Keratinocyte (primary cell): ENCODE measurements at regions of chr3 and their contacts with region 1.

Region 1: DNA sequence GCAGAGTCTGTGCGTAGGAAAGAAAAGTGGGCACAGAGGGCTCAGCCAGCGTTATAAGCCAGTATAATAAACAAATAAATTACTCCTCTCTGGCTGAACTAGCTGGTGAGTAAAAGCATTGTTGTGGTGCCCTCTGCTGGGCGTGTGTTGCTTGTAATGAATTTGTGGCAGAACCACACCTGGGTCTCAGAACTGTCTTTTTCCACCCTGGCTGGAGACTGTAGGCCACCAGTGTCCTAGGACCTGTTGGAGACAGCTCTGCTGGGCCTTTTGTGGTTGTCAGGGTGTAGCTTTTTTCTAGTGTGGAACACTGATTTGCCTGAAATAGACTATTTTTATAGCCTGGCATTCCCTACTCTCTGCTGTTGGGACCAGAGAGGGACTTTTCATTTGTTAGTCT is 130.5 kb upstream of the EIF1B start:
- DNase-seq: peak; percentile 11
- H3K4me3 ChIP-seq: no peak overlapping the region
- H3K27ac ChIP-seq: no peak overlapping the region
- H3K4me1 ChIP-seq: no peaks in the 10 kb centered on the region
- H3K27me3 ChIP-seq: no peaks in the 10 kb centered on the region
- CTCF ChIP-seq: peak; percentile 70 to 84 (median 79)

Region 2: DNA sequence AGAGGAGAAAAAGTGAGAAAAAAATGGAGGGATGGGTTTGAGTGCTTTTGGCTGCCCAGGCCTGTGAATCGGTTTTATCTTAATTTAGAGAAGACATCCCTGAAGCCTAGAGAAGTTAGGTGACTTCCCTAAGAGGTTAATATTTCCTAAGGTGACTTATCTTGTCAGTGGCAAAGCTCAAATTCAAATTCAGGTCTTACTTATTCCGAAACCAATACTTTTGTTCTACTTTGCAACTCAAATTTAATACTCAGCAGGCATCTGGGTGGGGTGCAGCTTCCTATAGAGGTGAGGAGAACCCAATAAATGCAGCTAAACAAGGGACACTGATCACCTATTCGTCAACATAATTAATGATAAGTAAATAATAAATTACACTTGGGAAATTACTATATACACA is 424.5 kb before region 1 on chr3:
- dilution Hi-C with region 1: no loop called
- DNase-seq: no peak
- H3K4me3 ChIP-seq: no peak overlapping the region
- H3K27ac ChIP-seq: no peak overlapping the region
- H3K4me1 ChIP-seq: peaks cover 11% of the 10 kb centered on the region
- H3K27me3 ChIP-seq: no peaks in the 10 kb centered on the region
- CTCF ChIP-seq: no peak

Region 3: DNA sequence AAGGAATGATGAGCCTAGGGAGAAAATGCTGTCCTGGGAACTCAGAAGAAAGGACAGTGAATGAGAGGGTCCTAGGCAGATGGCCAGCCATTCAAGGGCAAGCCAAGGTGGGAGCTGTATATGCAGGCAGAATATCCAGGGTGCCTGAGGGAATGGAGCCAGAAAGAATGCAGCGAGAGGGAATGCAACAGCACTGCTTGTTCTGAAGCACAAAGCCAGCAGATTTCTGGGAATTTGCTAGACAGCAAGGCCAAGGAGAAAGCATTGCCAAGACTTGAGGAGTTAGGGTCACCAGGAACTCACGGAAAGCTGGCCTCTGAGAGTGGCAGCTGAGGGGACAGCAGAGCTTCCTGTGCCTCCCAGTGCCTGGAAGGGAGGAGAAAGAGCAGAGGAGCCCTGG is 169.0 kb before region 1 on chr3:
- dilution Hi-C with region 1: loop called (anchors 25 kb)
- DNase-seq: no peak
- H3K4me3 ChIP-seq: no peak overlapping the region
- H3K27ac ChIP-seq: no peak overlapping the region
- H3K4me1 ChIP-seq: no peaks in the 10 kb centered on the region
- H3K27me3 ChIP-seq: no peaks in the 10 kb centered on the region
- CTCF ChIP-seq: no peak

Region 4: GRCh38 chr3:40035177-40035576 is 143.8 kb before region 1 on chr3:
- dilution Hi-C with region 1: no loop called
- DNase-seq: no peak
- H3K4me3 ChIP-seq: no peak overlapping the region
- H3K27ac ChIP-seq: no peak overlapping the region
- H3K4me1 ChIP-seq: no peaks in the 10 kb centered on the region
- H3K27me3 ChIP-seq: no peaks in the 10 kb centered on the region
- CTCF ChIP-seq: no peak